BJ (cell line): ENCODE measurements at regions of chr14 and their contacts with region 1.

Region 1: DNA sequence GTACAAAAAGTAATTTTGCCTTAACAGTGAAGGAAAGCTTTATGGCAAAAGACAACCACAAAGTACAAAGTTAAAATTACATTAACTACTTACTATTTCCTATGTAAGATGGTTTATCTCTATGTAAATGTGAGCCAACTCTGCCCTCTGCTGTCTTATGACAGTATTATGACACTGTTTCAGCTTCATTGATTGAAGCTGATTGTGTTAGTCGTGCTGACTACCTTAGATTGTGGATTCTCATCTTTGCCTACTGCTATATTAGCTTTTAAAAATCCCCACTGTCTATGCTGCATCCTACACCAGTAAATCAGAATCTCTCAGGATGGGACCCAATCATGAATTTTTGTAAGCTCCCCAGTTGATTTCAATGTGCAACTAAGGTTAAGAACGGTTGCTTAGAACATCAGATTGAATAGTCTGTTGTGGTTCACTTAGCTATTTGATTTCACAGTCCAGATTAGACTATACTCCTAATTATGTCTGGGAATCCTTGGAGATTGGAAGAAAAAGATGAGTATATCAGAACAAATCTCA is 12.2 kb upstream of the SPTB start:
- DNase-seq: no peak
- H3K4me3 ChIP-seq: no peak overlapping the region
- H3K27me3 ChIP-seq: peaks cover 5% of the 10 kb centered on the region; the same call in 1 of the 2 replicates
- CTCF ChIP-seq: peak; percentile 50

Region 2: GRCh38 chr14:64671591-64671990 is 220.3 kb before region 1 on chr14:
- CTCF ChIA-PET with region 1: interaction called, 46 read pairs
- POLR2A ChIA-PET with region 1: no interaction called
- DNase-seq: no peak
- H3K4me3 ChIP-seq: no peak overlapping the region
- H3K27me3 ChIP-seq: no peaks in the 10 kb centered on the region
- CTCF ChIP-seq: peak; percentile 79

Region 3: DNA sequence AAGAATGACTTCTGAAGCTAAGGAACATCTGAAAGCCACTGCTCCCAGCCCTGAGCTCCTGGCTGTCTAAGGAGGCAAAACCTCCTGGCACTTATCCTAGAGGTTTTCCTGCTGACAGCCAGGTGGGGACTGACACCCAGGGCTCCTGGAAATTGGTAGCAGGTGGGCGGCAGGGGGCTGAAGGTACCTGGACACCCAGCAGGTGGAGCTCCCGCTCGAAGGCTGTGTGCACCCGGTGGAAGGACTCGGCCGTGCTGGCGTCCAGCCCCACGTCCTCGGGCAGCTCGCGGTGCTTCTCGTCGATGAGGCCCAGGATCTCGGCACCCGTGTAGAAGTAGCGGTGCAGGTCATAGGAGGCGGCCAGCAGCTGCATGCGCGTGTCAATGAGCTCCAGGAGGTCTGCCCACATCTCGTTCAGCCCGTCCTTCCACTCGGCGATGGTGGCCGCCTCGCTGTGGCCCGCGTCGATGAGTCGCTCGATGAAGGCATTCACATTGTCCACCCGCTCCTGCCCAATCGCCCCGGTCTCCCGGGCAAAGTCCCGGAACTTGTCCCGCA is 119.4 kb before region 1 on chr14:
- CTCF ChIA-PET with region 1: interaction called, 10 read pairs
- POLR2A ChIA-PET with region 1: no interaction called
- DNase-seq: no peak
- H3K4me3 ChIP-seq: no peak overlapping the region
- H3K27me3 ChIP-seq: peaks cover 5% of the 10 kb centered on the region; the same call in 1 of the 2 replicates
- CTCF ChIP-seq: no peak

Region 4: DNA sequence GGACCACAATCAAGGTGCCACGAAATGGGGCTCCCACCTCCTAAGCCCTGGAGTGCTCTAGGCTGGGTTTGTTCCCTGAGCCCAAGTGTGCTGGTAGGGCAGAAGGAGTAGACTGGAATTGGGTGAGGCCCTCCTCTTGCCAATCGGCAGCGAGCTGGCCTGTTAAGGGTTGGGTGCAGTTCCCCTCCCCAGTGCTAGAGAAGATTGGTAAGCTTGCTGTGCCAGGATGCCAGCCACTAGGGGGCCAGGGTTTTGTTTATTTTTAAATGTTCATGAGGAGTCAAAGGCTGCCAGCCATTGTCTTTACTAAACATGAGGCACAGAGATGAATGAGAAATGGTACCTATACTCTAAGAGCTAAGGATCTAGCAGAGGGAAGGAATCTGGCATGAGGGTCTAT is 91.9 kb before region 1 on chr14:
- CTCF ChIA-PET with region 1: interaction called, 73 read pairs
- POLR2A ChIA-PET with region 1: no interaction called
- DNase-seq: no peak
- H3K4me3 ChIP-seq: no peak overlapping the region
- H3K27me3 ChIP-seq: no peaks in the 10 kb centered on the region
- CTCF ChIP-seq: peak; percentile 69

Region 5: DNA sequence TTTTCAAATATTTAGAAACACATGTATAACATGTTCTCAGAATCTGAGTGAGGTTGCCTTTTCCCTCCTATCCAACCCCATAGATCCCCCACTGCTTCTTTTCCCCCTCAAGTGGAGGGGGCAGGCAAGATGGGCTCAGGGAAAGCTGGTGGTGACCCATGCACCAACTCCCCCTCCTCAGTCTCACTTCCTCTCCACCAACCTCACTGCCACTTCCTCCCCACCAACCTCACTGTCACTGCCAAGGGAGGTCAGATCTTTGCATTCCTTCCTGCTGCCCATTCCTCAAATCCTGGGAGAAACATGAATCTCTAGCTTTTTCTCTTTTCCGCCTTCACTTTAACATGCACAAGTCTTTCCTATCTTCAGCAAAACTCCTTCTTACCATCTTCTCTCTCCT is 60.9 kb before region 1 on chr14:
- CTCF ChIA-PET with region 1: interaction called, 20 read pairs
- POLR2A ChIA-PET with region 1: no interaction called
- DNase-seq: no peak
- H3K4me3 ChIP-seq: no peak overlapping the region
- H3K27me3 ChIP-seq: peaks cover 3% of the 10 kb centered on the region; the same call in 1 of the 2 replicates
- CTCF ChIP-seq: no peak

Region 6: GRCh38 chr14:64880221-64881121 is 11.4 kb before region 1 on chr14:
- CTCF ChIA-PET with region 1: interaction called, 44 read pairs
- POLR2A ChIA-PET with region 1: no interaction called
- DNase-seq: no peak
- H3K4me3 ChIP-seq: peak overlapping the region; percentile 19
- H3K27me3 ChIP-seq: peaks cover 38% of the 10 kb centered on the region
- CTCF ChIP-seq: no peak

Region 7: DNA sequence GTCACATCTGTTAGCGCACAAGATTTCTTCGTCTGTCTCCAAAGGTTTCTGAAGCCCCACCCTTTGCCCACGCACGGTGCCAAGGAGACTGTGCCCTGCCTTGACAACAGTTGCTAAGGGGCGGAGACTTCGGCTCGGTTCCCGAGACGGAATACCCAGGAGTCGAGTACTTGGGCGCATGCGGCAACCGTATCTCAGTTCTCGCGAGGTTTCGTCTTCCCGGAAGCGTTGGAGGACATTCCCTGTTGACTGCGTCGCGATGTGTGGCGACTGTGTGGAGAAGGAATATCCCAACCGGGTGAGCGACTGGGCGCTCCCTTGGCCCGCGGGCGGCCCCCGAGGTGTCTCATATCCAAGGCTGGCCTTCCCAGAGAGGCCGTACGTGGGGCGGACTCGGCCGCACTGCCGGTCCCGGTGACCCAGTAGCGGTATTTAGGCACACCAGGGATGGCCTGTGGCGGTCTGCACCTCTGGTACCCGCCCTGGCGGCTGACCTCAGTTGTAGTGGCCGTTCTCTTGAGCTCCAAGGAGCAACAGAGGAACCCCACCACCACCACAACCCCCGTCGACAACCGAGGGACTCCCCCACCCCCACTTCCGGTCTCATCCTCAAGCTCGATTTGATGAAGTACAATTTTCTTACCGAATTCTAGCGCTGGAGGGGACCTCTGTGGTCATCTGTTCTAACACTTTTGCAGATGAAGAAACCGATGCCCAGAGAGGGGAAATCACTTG is 22.5 kb after region 1 on chr14 and contains the start of gene CHURC1:
- CTCF ChIA-PET with region 1: interaction called, 31 read pairs
- POLR2A ChIA-PET with region 1: no interaction called
- DNase-seq: peak; percentile 87
- H3K4me3 ChIP-seq: peak within 1 kb of the TSS; percentile 91
- H3K27me3 ChIP-seq: peaks cover 4% of the 10 kb centered on the region
- CTCF ChIP-seq: no peak
- polyA plus RNA-seq, gene CHURC1: 30.6 and 84.4 TPM in 2 replicates

Region 8: DNA sequence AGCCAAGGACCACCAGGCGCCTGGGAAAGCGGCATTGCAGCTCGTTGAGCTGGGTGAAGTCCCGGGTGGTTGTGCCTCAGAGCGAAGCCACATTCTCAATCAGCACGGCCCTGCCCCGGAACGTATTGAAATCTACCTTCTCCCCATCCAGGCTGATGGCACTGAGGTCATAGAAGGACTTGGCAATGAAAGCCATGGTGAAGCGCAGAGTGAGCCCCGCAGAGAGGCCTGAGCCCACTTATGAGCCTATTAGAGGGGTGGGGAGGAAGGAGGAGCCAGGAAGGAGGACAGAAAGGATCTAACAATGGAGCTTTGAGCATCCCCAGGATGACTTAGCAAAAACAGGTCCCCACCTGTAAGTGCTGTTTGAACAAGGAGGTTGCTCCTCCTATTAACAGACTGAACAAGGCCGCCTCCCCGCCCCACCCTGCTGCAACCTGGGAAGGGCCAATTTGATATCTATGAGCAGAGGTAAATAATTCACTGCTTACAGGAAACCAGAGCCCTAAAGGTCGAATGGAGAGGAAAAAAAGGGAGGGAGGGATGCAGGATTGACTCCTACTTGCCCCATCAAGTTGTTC is 50.7 kb after region 1 on chr14 and contains the start of gene GPX2:
- CTCF ChIA-PET with region 1: no interaction called
- POLR2A ChIA-PET with region 1: no interaction called
- DNase-seq: no peak
- H3K4me3 ChIP-seq: no peak within 1 kb of the TSS
- H3K27me3 ChIP-seq: no peaks in the 10 kb centered on the region
- CTCF ChIP-seq: no peak
- polyA plus RNA-seq, gene GPX2: 0.15 TPM in 1 of 2 replicates, not detected in the other

Region 9: GRCh38 chr14:65128096-65128495 is 236.2 kb after region 1 on chr14:
- CTCF ChIA-PET with region 1: no interaction called
- POLR2A ChIA-PET with region 1: no interaction called
- DNase-seq: peak; percentile 4
- H3K4me3 ChIP-seq: no peak overlapping the region
- H3K27me3 ChIP-seq: peaks cover 2% of the 10 kb centered on the region
- CTCF ChIP-seq: no peak

Region 10: GRCh38 chr14:65206448-65207096 is 314.7 kb after region 1 on chr14:
- CTCF ChIA-PET with region 1: no interaction called
- POLR2A ChIA-PET with region 1: no interaction called
- DNase-seq: no peak
- H3K4me3 ChIP-seq: no peak overlapping the region
- H3K27me3 ChIP-seq: no peaks in the 10 kb centered on the region
- CTCF ChIP-seq: no peak